IMR-90 (cell line): ENCODE measurements at regions of chr12 and their contacts with region 1.

Region 1: GRCh38 chr12:28331130-28331529 is 140.9 kb downstream of the CCDC91 start:
- DNase-seq: no peak
- ATAC-seq: no peak
- H3K4me3 ChIP-seq: no peak overlapping the region
- H3K27ac ChIP-seq: no peak overlapping the region
- H3K4me1 ChIP-seq: no peaks in the 10 kb centered on the region
- H3K27me3 ChIP-seq: no peaks in the 10 kb centered on the region
- CTCF ChIP-seq: no peak
- POLR2A ChIP-seq: no peak
- RAD21 ChIP-seq: no peak

Region 2: DNA sequence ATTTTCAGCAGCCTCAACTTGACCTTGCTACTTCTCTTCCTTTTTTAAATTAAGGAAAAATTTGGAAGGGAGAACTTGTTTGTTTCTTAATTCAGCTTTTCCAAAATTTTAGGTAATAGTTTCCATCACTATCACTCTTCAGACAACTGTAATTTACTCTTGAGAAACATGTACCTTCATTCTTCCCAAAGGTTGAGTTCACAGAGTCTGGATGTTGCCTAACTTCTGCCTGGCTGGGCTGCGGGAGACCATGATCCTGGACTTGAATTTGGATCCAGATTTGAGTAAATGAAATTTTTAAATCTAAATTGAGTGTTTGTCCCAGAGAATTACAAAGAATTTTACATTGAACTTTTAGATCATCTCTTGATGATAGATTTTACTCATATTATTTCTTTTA is 52.2 kb after region 1 on chr12:
- CTCF ChIA-PET with region 1: no interaction called
- POLR2A ChIA-PET with region 1: no interaction called
- dilution Hi-C with region 1: no loop called
- in situ Hi-C with region 1: no loop called
- intact Hi-C with region 1: loop called (anchors 5 kb)
- DNase-seq: no peak
- ATAC-seq: no peak
- H3K4me3 ChIP-seq: no peak overlapping the region
- H3K27ac ChIP-seq: no peak overlapping the region
- H3K4me1 ChIP-seq: no peaks in the 10 kb centered on the region
- H3K27me3 ChIP-seq: no peaks in the 10 kb centered on the region
- CTCF ChIP-seq: no peak
- POLR2A ChIP-seq: no peak
- RAD21 ChIP-seq: no peak

Region 3: GRCh38 chr12:28569698-28570411 is 238.7 kb after region 1 on chr12:
- CTCF ChIA-PET with region 1: no interaction called
- POLR2A ChIA-PET with region 1: no interaction called
- dilution Hi-C with region 1: no loop called
- in situ Hi-C with region 1: no loop called
- intact Hi-C with region 1: no loop called
- DNase-seq: peak; percentile 80
- ATAC-seq: peak; percentile 82
- H3K4me3 ChIP-seq: no peak overlapping the region
- H3K27ac ChIP-seq: peak overlapping the region; percentile 86
- H3K4me1 ChIP-seq: peaks cover 14% of the 10 kb centered on the region
- H3K27me3 ChIP-seq: no peaks in the 10 kb centered on the region
- CTCF ChIP-seq: no peak
- POLR2A ChIP-seq: no peak
- RAD21 ChIP-seq: no peak